Natural killer cell (primary cell): ENCODE measurements at regions of chr18 and their contacts with region 1.

Region 1: GRCh38 chr18:68847219-68847837 is 49.4 kb downstream of the CCDC102B start:
- DNase-seq: peak in 1 of 2 donors; percentile 36
- ATAC-seq: no peak
- H3K4me3 ChIP-seq: no peak overlapping the region
- H3K4me3 Mint-ChIP-seq: no peak overlapping the region
- H3K27ac ChIP-seq: no peak overlapping the region
- H3K27ac Mint-ChIP-seq: no peak overlapping the region
- H3K4me1 ChIP-seq: no peaks in the 10 kb centered on the region
- H3K4me1 Mint-ChIP-seq: no peaks in the 10 kb centered on the region
- H3K27me3 ChIP-seq: no peaks in the 10 kb centered on the region
- H3K27me3 Mint-ChIP-seq: no peaks in the 10 kb centered on the region
- CTCF ChIP-seq: peak; percentile 60

Region 2: GRCh38 chr18:68780802-68781635 is 66.3 kb before region 1 on chr18:
- intact Hi-C with region 1: no loop called
- DNase-seq: no peak
- ATAC-seq: no peak
- H3K4me3 ChIP-seq: no peak overlapping the region
- H3K4me3 Mint-ChIP-seq: no peak overlapping the region
- H3K27ac ChIP-seq: no peak overlapping the region
- H3K27ac Mint-ChIP-seq: no peak overlapping the region
- H3K4me1 ChIP-seq: no peaks in the 10 kb centered on the region
- H3K4me1 Mint-ChIP-seq: no peaks in the 10 kb centered on the region
- H3K27me3 ChIP-seq: no peaks in the 10 kb centered on the region
- H3K27me3 Mint-ChIP-seq: no peaks in the 10 kb centered on the region
- CTCF ChIP-seq: no peak

Region 3: DNA sequence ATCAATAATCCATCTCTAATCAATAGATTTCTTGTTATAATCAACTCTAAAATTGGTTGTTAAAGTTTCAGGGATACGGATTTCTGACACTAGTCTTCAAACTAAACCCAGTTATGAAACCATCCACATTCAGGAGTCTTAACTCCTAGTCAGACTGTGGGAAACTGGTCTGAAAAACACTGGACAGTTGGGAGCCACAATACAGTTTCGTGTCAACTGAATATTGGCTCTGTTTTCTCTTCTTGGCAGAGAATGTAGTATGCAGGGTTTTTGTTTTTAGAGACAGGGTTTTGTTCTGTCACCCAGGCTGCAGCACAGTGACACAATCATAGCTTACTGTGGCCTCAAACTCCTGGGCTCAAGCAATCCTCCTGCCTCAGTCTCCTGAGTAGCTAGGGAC is 1235.1 kb after region 1 on chr18:
- intact Hi-C with region 1: loop called (anchors 2 kb)
- DNase-seq: no peak
- ATAC-seq: no peak
- H3K4me3 ChIP-seq: no peak overlapping the region
- H3K4me3 Mint-ChIP-seq: no peak overlapping the region
- H3K27ac ChIP-seq: no peak overlapping the region
- H3K27ac Mint-ChIP-seq: no peak overlapping the region
- H3K4me1 ChIP-seq: no peaks in the 10 kb centered on the region
- H3K4me1 Mint-ChIP-seq: no peaks in the 10 kb centered on the region
- H3K27me3 ChIP-seq: no peaks in the 10 kb centered on the region
- H3K27me3 Mint-ChIP-seq: no peaks in the 10 kb centered on the region
- CTCF ChIP-seq: no peak

Region 4: DNA sequence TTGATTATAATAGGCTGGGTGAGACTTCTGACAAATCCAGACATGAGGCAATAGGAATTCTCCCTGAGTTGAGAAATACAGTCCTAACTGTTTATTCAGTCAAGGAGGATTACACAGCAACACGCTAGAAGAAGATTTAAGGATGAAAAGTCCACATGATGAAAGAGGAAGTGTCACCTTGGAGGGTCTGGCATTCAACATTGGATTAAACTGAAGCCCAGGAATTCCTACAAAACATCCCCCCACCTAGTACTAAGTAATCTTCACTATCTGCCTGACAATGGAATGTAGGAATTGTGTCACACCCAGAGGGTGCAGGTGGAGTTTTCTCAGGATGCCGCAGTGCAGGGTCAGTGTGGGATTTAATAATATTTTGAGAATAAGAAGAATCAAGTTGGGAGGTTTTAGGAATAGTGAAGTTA is 1583.9 kb after region 1 on chr18:
- intact Hi-C with region 1: loop called (anchors 2 kb)
- DNase-seq: no peak
- ATAC-seq: no peak
- H3K4me3 ChIP-seq: no peak overlapping the region
- H3K4me3 Mint-ChIP-seq: no peak overlapping the region
- H3K27ac ChIP-seq: no peak overlapping the region
- H3K27ac Mint-ChIP-seq: no peak overlapping the region
- H3K4me1 ChIP-seq: no peaks in the 10 kb centered on the region
- H3K4me1 Mint-ChIP-seq: no peaks in the 10 kb centered on the region
- H3K27me3 ChIP-seq: no peaks in the 10 kb centered on the region
- H3K27me3 Mint-ChIP-seq: no peaks in the 10 kb centered on the region
- CTCF ChIP-seq: no peak

Region 5: GRCh38 chr18:70454704-70455322 is 1607.5 kb after region 1 on chr18:
- intact Hi-C with region 1: loop called (anchors 5 kb)
- DNase-seq: peak in 1 of 2 donors; percentile 67
- ATAC-seq: peak; percentile 48 to 64 (median 52)
- H3K4me3 ChIP-seq: no peak overlapping the region
- H3K4me3 Mint-ChIP-seq: no peak overlapping the region
- H3K27ac ChIP-seq: no peak overlapping the region
- H3K27ac Mint-ChIP-seq: no peak overlapping the region
- H3K4me1 ChIP-seq: no peaks in the 10 kb centered on the region
- H3K4me1 Mint-ChIP-seq: no peaks in the 10 kb centered on the region
- H3K27me3 ChIP-seq: no peaks in the 10 kb centered on the region
- H3K27me3 Mint-ChIP-seq: peaks cover 0 to 5% of the 10 kb centered on the region in 2 donors
- CTCF ChIP-seq: peak; percentile 73